Common myeloid progenitor, CD34-positive (primary cell): ENCODE measurements at regions of chr1 and their contacts with region 1.

Region 1: GRCh38 chr1:208245185-208245705 is 1.1 kb upstream of the PLXNA2 start:
- DNase-seq: peak; percentile 87 to 91 (median 90)
- H3K4me3 ChIP-seq: peak overlapping the region in 5 of 7 experiments; percentile 61 to 82 (median 75)
- H3K27ac ChIP-seq: no peak overlapping the region
- H3K4me1 ChIP-seq: peaks cover 3 to 26% (median 24%) of the 10 kb centered on the region in 4 experiments
- H3K27me3 ChIP-seq: peaks cover 2 to 35% (median 22%) of the 10 kb centered on the region in 5 experiments

Region 2: DNA sequence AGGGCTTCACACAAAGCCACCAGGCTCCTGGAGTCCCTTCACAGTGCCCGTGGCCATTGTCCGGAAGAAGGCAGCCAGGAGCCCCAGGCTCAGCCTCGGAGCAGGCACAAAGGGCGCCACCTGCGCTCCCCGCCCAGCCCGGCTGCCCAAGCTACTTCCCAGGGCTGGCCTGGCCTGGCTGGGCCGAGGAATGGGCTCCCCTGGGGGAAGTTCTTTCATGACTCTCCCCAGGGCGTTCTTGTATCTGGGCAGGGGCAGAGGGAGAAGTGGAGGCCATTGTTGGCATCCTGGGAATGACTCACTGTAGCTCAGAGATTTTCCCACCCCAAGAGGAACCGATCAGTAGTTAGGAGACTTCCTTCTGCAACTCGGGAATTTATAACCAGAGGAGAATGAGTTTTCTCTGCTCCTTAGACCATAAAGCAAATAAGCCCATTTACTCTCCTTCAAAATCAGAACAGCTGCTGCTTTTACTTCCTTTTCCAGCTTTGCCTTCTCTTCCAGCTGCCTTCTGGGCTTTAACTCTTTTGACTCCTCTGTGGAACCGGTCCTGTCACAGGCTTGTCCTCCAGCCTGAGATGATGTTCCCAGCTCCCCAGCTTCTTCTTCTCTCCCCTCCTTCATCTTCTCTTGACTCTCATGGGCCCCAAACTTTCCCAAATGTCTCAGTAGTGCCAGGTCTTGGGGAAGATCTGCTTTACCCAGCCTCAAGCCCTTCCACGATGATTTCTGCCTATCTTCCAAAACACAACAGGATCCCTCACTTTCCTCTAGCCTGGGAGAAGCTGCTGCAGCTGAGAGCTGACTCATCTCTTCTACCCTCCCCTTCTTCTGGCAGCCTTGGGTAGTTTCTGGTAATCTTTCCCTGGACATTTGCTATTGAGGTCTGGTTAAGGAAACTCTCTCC is 215.6 kb before region 1 on chr1:
- CTCF ChIA-PET with region 1: interaction called, 160 read pairs
- POLR2A ChIA-PET with region 1: interaction called, 4 read pairs
- DNase-seq: peak in 1 of 3 donors; percentile 16
- H3K4me3 ChIP-seq: no peak overlapping the region
- H3K27ac ChIP-seq: no peak overlapping the region
- H3K4me1 ChIP-seq: peaks cover 0 to 10% (median 6%) of the 10 kb centered on the region in 4 experiments
- H3K27me3 ChIP-seq: peaks cover 0 to 2% (median 0%) of the 10 kb centered on the region in 5 experiments

Region 3: GRCh38 chr1:208036109-208036808 is 209.0 kb before region 1 on chr1:
- CTCF ChIA-PET with region 1: interaction called, 10 read pairs
- POLR2A ChIA-PET with region 1: no interaction called
- DNase-seq: no peak
- H3K4me3 ChIP-seq: no peak overlapping the region
- H3K27ac ChIP-seq: no peak overlapping the region
- H3K4me1 ChIP-seq: no peaks in the 10 kb centered on the region
- H3K27me3 ChIP-seq: peaks cover 0 to under 1% (median 0%) of the 10 kb centered on the region in 5 experiments

Region 4: DNA sequence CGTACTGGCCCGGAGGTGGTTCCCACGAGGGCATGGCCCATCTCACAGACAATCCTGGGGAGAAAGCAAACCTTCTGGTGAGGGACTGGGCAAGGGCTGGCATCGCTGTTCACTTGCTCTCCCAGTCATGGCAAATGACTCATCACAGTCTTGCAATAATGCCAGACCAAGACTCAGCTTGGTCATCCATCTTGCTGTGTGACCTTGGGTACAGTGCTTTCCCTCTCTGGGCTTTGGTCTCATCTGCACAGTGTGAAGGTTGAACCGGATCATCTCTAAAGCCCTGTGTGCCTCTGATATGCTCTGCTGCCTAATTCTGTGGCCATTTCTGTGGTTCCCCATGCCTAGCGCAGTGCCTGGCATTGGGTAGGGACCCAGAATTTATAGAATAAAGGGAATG is 190.8 kb before region 1 on chr1:
- CTCF ChIA-PET with region 1: no interaction called
- POLR2A ChIA-PET with region 1: no interaction called
- DNase-seq: no peak
- H3K4me3 ChIP-seq: no peak overlapping the region
- H3K27ac ChIP-seq: no peak overlapping the region
- H3K4me1 ChIP-seq: no peaks in the 10 kb centered on the region
- H3K27me3 ChIP-seq: peaks cover 0 to 2% (median 0%) of the 10 kb centered on the region in 5 experiments

Region 5: DNA sequence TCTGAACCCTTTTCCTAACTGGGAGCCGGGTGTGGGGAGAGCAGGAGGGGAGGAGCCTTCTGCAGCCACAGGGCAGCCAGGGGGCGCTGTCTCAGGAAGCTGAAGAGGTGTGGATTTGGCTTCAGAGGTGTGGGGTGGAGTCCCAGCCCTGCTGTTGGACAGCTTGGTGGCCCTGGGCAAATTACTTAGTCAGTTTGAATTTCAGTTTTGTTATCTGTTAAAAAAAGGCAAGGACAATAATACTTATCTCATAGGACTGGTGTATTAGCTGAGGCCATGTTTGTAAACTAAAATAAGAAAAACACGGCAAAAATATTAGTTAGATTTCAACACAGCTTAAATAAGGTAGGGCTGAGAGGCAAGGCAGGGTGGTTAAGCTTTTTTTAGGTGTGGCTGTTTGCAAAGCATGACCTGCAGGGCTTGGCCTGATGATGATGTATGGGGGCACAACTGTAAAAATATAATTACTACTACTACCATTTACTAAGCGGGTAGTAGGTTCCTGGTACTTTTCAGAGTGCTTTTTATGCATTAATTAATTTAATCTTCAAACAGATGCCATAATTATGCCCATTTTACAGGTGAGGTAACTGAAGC is 112.9 kb before region 1 on chr1:
- CTCF ChIA-PET with region 1: interaction called, 152 read pairs
- POLR2A ChIA-PET with region 1: no interaction called
- DNase-seq: peak; percentile 68 to 71 (median 69)
- H3K4me3 ChIP-seq: peak overlapping the region in 2 of 7 experiments; percentile 42 to 56
- H3K27ac ChIP-seq: no peak overlapping the region
- H3K4me1 ChIP-seq: peaks cover 0 to 6% (median 4%) of the 10 kb centered on the region in 4 experiments
- H3K27me3 ChIP-seq: peaks cover 0 to 6% (median 0%) of the 10 kb centered on the region in 5 experiments

Region 6: DNA sequence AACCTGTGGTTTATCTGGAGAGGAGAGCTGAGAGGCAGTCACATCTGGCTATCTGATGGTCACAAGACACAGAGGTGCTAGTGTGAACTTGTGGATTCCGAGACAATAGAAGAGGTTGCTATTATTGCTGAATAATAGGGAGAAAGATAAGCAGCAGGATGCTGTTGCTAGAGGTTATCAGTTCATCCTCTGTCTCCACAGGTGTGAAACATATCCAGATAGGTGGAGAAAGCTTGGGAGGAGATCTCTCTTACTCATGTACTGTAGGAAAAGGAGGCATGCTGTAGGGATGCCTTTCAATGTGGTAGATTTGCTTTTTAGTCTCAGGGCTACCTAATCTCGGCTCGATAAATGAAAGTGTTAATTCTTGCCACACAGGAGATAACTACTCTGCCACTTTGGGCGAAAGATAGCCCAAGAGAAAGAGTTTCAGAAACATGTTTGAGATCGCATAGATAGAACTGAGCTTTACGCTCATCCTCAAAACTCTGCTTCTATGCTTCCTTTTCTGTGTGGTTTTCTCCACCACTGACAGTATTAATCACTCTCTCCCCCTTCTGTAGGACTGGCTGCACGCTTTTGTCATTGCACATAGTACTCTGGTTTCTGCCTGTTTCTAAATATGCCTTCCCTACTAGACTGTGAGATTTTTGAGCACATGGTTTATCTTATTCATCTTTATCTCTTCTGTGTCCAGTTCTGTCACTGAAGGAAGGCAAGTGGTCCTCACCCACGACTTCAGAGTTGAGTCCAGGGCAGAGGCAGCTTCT is 35.6 kb after region 1 on chr1:
- CTCF ChIA-PET with region 1: no interaction called
- POLR2A ChIA-PET with region 1: no interaction called
- DNase-seq: peak in 2 of 3 donors; percentile 6 to 31
- H3K4me3 ChIP-seq: no peak overlapping the region
- H3K27ac ChIP-seq: no peak overlapping the region
- H3K4me1 ChIP-seq: no peaks in the 10 kb centered on the region
- H3K27me3 ChIP-seq: peaks cover 0 to 19% (median 0%) of the 10 kb centered on the region in 5 experiments

Region 7: GRCh38 chr1:209335178-209335577 is 1089.9 kb after region 1 on chr1:
- CTCF ChIA-PET with region 1: no interaction called
- POLR2A ChIA-PET with region 1: no interaction called
- DNase-seq: peak; percentile 14 to 44 (median 30)
- H3K4me3 ChIP-seq: no peak overlapping the region
- H3K27ac ChIP-seq: no peak overlapping the region
- H3K4me1 ChIP-seq: no peaks in the 10 kb centered on the region
- H3K27me3 ChIP-seq: peaks cover 0 to under 1% (median 0%) of the 10 kb centered on the region in 5 experiments